Activated B cell treated with CpG ODN at 0.5 μM for 24 hours (primary cell): ENCODE measurements at regions of chr5 and their contacts with region 1.

Region 1: DNA sequence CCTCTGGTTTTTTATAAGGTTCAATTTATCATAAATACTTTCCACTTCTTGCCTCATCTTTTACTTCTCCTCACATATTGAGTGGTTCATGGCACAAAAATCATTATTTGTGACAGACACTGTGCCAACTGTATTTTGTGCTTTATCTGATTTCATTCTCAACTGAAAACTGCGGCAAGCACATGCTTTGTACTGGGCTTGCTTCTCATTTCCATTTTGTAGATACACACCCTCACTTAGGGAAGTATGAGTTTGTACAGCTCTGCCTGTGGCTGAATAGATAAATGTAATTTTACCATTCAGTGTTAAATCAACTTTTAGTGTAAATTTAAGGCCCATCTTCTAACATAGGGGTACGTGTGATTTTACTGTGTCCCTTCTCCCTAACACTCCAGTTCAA is 83.6 kb downstream of the ANXA2R start:
- DNase-seq: no peak
- ATAC-seq: no peak
- H3K4me3 Mint-ChIP-seq: no peak overlapping the region
- H3K27ac Mint-ChIP-seq: no peak overlapping the region
- H3K4me1 Mint-ChIP-seq: peaks cover 11% of the 10 kb centered on the region
- H3K27me3 Mint-ChIP-seq: no peaks in the 10 kb centered on the region
- CTCF ChIP-seq: no peak

Region 2: GRCh38 chr5:42242881-42243485 is 713.6 kb before region 1 on chr5:
- CTCF ChIA-PET with region 1: no interaction called
- POLR2A ChIA-PET with region 1: no interaction called
- intact Hi-C with region 1: no loop called
- DNase-seq: no peak
- ATAC-seq: no peak
- H3K4me3 Mint-ChIP-seq: no peak overlapping the region
- H3K27ac Mint-ChIP-seq: no peak overlapping the region
- H3K4me1 Mint-ChIP-seq: no peaks in the 10 kb centered on the region
- H3K27me3 Mint-ChIP-seq: no peaks in the 10 kb centered on the region
- CTCF ChIP-seq: no peak

Region 3: DNA sequence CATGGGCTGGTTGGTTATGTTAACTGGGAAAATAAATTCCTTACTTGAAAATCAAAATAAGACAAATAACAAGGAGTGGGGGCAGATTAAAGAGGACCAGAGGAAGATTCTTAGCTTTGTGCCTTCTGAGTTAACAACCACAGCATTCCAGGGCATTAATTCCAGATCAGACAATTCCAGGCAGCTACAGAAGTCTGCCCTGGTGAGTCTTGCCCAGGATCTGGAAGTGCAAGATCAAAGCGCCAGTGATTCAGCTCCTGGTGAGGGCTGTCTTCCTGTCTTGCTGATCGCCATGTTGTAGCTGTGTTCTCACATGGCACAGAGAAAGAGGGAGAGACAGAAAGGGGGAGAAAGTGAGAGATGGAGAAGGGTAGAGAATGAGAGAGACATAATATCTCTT is 18.0 kb after region 1 on chr5:
- CTCF ChIA-PET with region 1: no interaction called
- POLR2A ChIA-PET with region 1: no interaction called
- intact Hi-C with region 1: loop called (anchors 2 kb)
- DNase-seq: no peak
- ATAC-seq: no peak
- H3K4me3 Mint-ChIP-seq: no peak overlapping the region
- H3K27ac Mint-ChIP-seq: no peak overlapping the region
- H3K4me1 Mint-ChIP-seq: no peaks in the 10 kb centered on the region
- H3K27me3 Mint-ChIP-seq: no peaks in the 10 kb centered on the region
- CTCF ChIP-seq: no peak